ENCODE measurements at regions of chr7 and their contacts with region 1.

Region 1: GRCh38 chr7:7640221-7641128 is at the start of gene UMAD1:
- DNase-seq: peak; percentile 98
- H3K4me3 Mint-ChIP-seq: peak within 1 kb of the TSS; percentile 96
- H3K27ac Mint-ChIP-seq: peak within 1 kb of the TSS; percentile 97
- H3K4me1 Mint-ChIP-seq: peaks cover 40% of the 10 kb centered on the region
- H3K27me3 Mint-ChIP-seq: no peaks in the 10 kb centered on the region
- total RNA-seq, gene UMAD1: 13.6 and 14.2 TPM in 2 replicates

Region 2: GRCh38 chr7:6008668-6009611 is 1631.5 kb before region 1 on chr7 and contains the starts of genes AIMP2 and PMS2:
- intact Hi-C with region 1: loop called (anchors 5 kb)
- DNase-seq: peak; percentile 97
- H3K4me3 Mint-ChIP-seq: peak within 1 kb of the TSS; percentile 89
- H3K27ac Mint-ChIP-seq: peak within 1 kb of the TSS; percentile 91
- H3K4me1 Mint-ChIP-seq: peaks cover 18% of the 10 kb centered on the region
- H3K27me3 Mint-ChIP-seq: no peaks in the 10 kb centered on the region
- total RNA-seq, gene AIMP2: 92.0 and 101 TPM in 2 replicates
- total RNA-seq, gene PMS2: 20.3 and 25.8 TPM in 2 replicates

Region 3: GRCh38 chr7:7182156-7183060 is 458.1 kb before region 1 on chr7 and contains the start of gene C1GALT1:
- intact Hi-C with region 1: loop called (anchors 1 kb)
- DNase-seq: peak; percentile 94
- H3K4me3 Mint-ChIP-seq: peak within 1 kb of the TSS; percentile 94
- H3K27ac Mint-ChIP-seq: peak within 1 kb of the TSS; percentile 99
- H3K4me1 Mint-ChIP-seq: peaks cover 6% of the 10 kb centered on the region
- H3K27me3 Mint-ChIP-seq: no peaks in the 10 kb centered on the region
- total RNA-seq, gene C1GALT1: 35.8 and 41.4 TPM in 2 replicates

Region 4: GRCh38 chr7:7614018-7614741 is 26.3 kb before region 1 on chr7:
- intact Hi-C with region 1: no loop called
- DNase-seq: no peak
- H3K4me3 Mint-ChIP-seq: no peak overlapping the region
- H3K27ac Mint-ChIP-seq: no peak overlapping the region
- H3K4me1 Mint-ChIP-seq: peaks cover 10% of the 10 kb centered on the region
- H3K27me3 Mint-ChIP-seq: no peaks in the 10 kb centered on the region

Region 5: DNA sequence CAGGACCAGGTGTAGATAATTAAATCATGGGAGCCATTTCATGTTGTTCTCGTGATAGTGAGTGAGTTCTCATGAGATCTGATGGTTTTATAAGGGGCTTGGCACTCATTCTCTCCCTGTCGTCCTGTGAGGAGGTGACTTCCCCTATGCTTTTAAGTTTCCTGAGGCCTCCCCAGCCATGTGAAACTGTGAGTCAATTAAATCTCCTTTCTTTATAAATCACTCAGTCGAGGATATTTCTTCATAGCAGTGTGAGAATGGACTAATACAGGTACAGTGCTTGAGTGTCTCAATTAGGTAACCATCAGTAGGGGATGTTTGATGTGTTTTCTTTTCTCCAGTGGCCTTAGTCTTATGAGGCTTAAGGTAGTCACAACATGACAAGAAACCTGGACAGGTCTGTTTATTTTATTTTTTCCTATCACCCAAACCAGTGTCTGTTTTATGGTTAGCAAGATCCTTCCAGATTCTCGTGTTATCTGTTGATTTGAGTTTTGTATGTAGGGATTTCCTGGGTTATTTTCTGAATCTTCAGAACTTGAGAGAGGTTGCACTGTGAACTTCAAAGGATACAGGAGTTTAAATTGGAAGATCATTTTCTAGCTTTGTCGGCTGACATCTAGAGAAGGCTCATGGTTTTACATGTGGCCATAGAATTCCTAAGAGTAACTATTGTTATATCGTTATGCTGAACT is 32.2 kb after region 1 on chr7:
- intact Hi-C with region 1: loop called (anchors 1 kb)
- DNase-seq: no peak
- H3K4me3 Mint-ChIP-seq: peak overlapping the region; percentile 46
- H3K27ac Mint-ChIP-seq: peak overlapping the region; percentile 64
- H3K4me1 Mint-ChIP-seq: peaks cover 28% of the 10 kb centered on the region
- H3K27me3 Mint-ChIP-seq: no peaks in the 10 kb centered on the region

Region 6: DNA sequence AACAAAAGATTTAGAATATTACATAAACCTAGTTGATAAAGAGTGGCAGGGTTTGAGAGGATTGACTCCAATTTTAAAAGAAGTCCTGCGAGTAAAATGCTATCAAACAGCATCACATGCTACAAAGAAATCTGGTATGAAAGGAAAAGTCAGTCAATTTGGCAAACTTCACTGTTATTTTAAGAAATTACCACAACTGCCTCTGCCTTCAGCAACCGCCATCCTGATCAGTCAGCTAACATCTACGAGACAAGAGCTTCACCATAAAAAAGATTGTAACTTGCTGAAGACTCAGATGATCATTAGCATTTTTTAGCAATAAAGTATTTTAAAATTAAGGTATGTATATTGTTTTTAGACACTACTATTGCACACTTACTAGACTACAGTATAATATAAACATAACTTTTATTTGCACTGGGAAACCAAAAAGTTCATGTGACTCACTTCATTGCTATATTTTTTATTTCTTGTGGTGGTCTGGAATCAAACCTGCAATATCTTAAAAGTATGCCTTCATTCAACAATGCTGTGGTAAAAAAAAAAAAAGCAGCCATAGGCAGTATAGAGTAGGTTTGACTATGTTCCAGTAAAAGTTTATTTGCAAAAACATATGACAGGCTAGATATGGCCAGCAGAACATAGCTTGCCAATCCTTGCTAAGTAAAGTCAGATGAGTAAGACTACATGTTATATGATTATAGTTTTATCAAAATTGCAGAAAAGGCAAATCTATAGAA is 402.5 kb after region 1 on chr7:
- intact Hi-C with region 1: loop called (anchors 2 kb)
- DNase-seq: no peak
- H3K4me3 Mint-ChIP-seq: no peak overlapping the region
- H3K27ac Mint-ChIP-seq: peak overlapping the region; percentile 61
- H3K4me1 Mint-ChIP-seq: peaks cover 74% of the 10 kb centered on the region
- H3K27me3 Mint-ChIP-seq: no peaks in the 10 kb centered on the region

Region 7: GRCh38 chr7:8176370-8177081 is 536.1 kb after region 1 on chr7:
- intact Hi-C with region 1: loop called (anchors 1 kb)
- DNase-seq: peak; percentile 60
- H3K4me3 Mint-ChIP-seq: peak overlapping the region; percentile 76
- H3K27ac Mint-ChIP-seq: peak overlapping the region; percentile 99
- H3K4me1 Mint-ChIP-seq: peaks cover 53% of the 10 kb centered on the region
- H3K27me3 Mint-ChIP-seq: peaks cover 2% of the 10 kb centered on the region

Region 8: GRCh38 chr7:8261711-8262695 is 621.5 kb after region 1 on chr7 and contains the start of gene ICA1:
- intact Hi-C with region 1: no loop called
- DNase-seq: no peak
- H3K4me3 Mint-ChIP-seq: peak within 1 kb of the TSS; percentile 81
- H3K27ac Mint-ChIP-seq: peak within 1 kb of the TSS; percentile 55
- H3K4me1 Mint-ChIP-seq: peaks cover 9% of the 10 kb centered on the region
- H3K27me3 Mint-ChIP-seq: peaks cover 43% of the 10 kb centered on the region
- total RNA-seq, gene ICA1: 1.9 and 2.3 TPM in 2 replicates